Mammary epithelial cell (primary cell): ENCODE measurements at regions of chr11 and their contacts with region 1.

Region 1: GRCh38 chr11:34351687-34352469 is 5.9 kb downstream of the ABTB2 start:
- DNase-seq: no peak
- H3K4me3 ChIP-seq: no peak overlapping the region
- H3K27ac ChIP-seq: no peak overlapping the region
- H3K4me1 ChIP-seq: peaks cover 17% of the 10 kb centered on the region
- H3K27me3 ChIP-seq: no peaks in the 10 kb centered on the region
- CTCF ChIP-seq: no peak

Region 2: GRCh38 chr11:34180040-34180813 is 171.7 kb before region 1 on chr11:
- CTCF ChIA-PET with region 1: no interaction called
- dilution Hi-C with region 1: loop called (anchors 5 kb)
- in situ Hi-C with region 1: no loop called
- intact Hi-C with region 1: no loop called
- DNase-seq: peak; percentile 57
- H3K4me3 ChIP-seq: no peak overlapping the region
- H3K27ac ChIP-seq: no peak overlapping the region
- H3K4me1 ChIP-seq: peaks cover 13% of the 10 kb centered on the region
- H3K27me3 ChIP-seq: no peaks in the 10 kb centered on the region
- CTCF ChIP-seq: no peak

Region 3: DNA sequence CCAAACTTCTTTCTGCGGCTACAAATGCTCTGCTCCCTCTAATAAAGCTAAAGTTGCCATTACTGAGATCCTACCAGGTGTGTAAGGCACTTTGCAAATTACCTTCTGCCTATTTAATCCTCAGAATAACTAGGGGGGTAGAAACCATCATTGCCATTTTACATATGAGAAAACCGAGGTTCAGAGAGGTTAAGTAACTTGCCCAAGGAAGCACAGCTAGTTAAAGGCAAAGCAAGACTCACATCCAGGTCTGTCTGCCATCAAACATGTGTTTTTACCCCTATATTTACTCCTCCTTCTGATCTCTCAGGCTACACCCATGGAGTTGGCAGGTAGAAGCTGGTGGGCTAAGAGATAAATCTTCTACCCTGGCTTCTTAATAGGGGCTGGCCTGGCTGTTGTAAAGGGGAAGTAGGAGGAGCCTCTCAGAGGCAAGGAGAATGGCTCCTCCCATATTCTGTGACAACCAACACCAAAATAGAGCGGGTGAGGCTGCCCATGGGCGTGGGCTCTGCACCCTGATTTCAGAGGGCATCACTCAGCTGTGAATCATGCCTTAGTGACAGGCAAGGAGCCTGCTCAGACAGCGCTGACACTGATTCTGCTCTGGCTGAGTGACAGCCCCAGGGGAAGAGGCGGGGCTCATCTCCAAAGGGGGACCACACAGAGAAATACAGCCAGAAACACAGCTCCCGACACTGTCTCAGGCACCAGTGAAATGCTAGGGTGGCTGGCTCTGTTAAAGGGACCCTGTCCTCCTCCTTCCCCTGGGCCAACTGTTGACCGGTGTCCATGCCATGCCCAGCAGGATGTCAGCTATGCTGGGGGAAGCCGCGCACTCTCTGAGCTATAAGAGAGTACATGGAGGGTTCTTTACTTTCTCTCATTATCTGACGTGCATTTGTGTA is 100.9 kb before region 1 on chr11:
- CTCF ChIA-PET with region 1: no interaction called
- dilution Hi-C with region 1: loop called (anchors 5 kb)
- in situ Hi-C with region 1: no loop called
- intact Hi-C with region 1: no loop called
- DNase-seq: peak; percentile 84
- H3K4me3 ChIP-seq: no peak overlapping the region
- H3K27ac ChIP-seq: no peak overlapping the region
- H3K4me1 ChIP-seq: peaks cover 10% of the 10 kb centered on the region
- H3K27me3 ChIP-seq: no peaks in the 10 kb centered on the region
- CTCF ChIP-seq: no peak

Region 4: GRCh38 chr11:34302046-34302921 is 49.6 kb before region 1 on chr11:
- CTCF ChIA-PET with region 1: no interaction called
- dilution Hi-C with region 1: no loop called
- in situ Hi-C with region 1: no loop called
- intact Hi-C with region 1: no loop called
- DNase-seq: peak; percentile 77
- H3K4me3 ChIP-seq: no peak overlapping the region
- H3K27ac ChIP-seq: no peak overlapping the region
- H3K4me1 ChIP-seq: peaks cover 15% of the 10 kb centered on the region
- H3K27me3 ChIP-seq: no peaks in the 10 kb centered on the region
- CTCF ChIP-seq: no peak

Region 5: DNA sequence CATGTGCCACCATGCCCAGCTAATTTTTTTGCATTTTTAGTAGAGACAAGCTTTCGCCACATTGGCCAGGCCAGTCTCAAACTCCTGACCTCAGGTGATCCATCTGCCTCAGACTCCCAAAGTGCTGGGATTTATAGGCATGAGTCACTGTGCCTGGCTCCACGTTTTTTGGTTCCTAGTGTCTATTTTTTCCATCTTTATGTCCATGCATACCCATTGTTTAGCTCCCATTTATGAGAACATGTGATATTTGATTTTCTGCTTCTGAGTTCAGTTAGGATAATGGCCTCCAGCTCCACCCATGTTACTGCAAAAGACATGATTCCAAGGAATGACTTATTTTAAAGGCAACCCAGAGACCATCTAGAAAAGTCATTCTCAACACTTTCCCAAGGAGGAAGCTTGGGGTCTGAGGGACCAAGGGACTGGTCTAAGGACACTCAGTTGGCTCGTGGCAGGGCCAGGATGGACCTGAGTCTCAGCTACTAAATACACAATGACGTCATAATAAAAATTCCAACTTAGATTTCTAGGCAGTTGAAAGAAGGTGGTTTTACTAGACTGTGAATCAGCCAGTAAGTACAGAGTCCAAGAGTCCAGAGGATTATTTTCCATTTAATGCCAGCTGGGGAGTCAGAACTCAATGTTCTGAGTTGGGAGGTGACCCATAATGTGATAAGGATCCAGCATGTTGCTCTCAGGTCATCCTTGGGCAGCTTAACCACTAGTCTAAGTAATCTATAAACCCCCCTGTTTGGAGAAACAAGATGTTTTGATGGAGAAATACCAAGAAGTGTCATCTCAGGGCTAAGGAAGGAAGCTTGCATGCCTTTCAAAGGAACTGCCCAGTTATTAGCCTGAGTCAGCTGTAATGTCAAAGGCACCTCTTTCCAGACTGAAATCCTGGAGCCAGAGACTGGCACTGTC is 33.5 kb before region 1 on chr11:
- CTCF ChIA-PET with region 1: no interaction called
- dilution Hi-C with region 1: loop called (anchors 5 kb)
- in situ Hi-C with region 1: no loop called
- intact Hi-C with region 1: no loop called
- DNase-seq: peak; percentile 58
- H3K4me3 ChIP-seq: no peak overlapping the region
- H3K27ac ChIP-seq: no peak overlapping the region
- H3K4me1 ChIP-seq: peaks cover 6% of the 10 kb centered on the region
- H3K27me3 ChIP-seq: no peaks in the 10 kb centered on the region
- CTCF ChIP-seq: no peak